CD4-positive, alpha-beta T cell (primary cell): ENCODE measurements at regions of chr16 and their contacts with region 1.

Region 1: GRCh38 chr16:67428146-67428731 is 2.7 kb upstream of the HSD11B2 start:
- DNase-seq: peak in 12 of 14 experiments; percentile 18 to 72 (median 42)
- ATAC-seq: peak; percentile 56
- H3K4me3 ChIP-seq: no peak overlapping the region
- H3K4me3 Mint-ChIP-seq: no peak overlapping the region
- H3K27ac ChIP-seq: no peak overlapping the region
- H3K27ac Mint-ChIP-seq: no peak overlapping the region
- H3K4me1 ChIP-seq: peaks cover 20% of the 10 kb centered on the region
- H3K4me1 Mint-ChIP-seq: peaks cover 9% of the 10 kb centered on the region
- H3K27me3 ChIP-seq: peaks cover 35 to 49% of the 10 kb centered on the region in 2 experiments
- H3K27me3 Mint-ChIP-seq: peaks cover 62% of the 10 kb centered on the region
- CTCF ChIP-seq: peak; percentile 63

Region 2: DNA sequence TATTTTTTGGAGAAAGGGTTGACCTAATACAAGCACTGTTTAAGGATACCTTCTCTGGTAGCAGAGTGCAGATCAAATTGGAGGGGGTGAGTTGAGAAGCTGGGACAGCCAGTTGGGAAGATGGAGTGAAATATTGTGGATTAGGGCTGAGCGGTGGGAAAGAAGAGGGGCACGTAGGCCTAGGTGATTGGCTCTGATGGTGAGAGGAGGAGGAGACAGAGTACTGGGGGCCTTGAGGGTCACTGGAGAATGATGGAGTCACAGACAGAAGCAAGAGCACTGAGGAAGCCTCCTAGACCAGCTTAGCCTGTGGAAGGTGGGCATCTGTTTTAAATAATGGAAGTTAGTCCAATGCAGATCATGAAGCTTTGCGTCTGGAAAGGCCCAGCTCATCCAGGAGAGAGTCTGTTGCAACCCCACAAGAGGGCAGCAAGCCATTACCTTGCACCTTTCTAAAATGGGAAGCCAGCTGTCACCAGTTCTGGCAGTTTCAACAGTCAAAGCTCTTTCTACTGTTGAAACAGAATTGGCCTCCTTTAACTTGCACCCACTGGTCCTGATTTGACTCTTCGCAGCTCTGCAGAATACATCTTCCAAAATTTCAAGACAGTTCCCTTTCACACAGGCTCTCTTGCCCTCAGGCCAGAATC is 167.7 kb before region 1 on chr16:
- CTCF ChIA-PET with region 1: no interaction called
- POLR2A ChIA-PET with region 1: no interaction called
- intact Hi-C with region 1: loop called in 1 of 2 experiments (anchors 5 kb)
- DNase-seq: peak in 4 of 14 experiments; percentile 24 to 47 (median 32)
- ATAC-seq: no peak
- H3K4me3 ChIP-seq: no peak overlapping the region
- H3K4me3 Mint-ChIP-seq: no peak overlapping the region
- H3K27ac ChIP-seq: no peak overlapping the region
- H3K27ac Mint-ChIP-seq: no peak overlapping the region
- H3K4me1 ChIP-seq: no peaks in the 10 kb centered on the region
- H3K4me1 Mint-ChIP-seq: no peaks in the 10 kb centered on the region
- H3K27me3 ChIP-seq: peaks cover 6 to 12% of the 10 kb centered on the region in 2 experiments
- H3K27me3 Mint-ChIP-seq: peaks cover 12% of the 10 kb centered on the region
- CTCF ChIP-seq: peak; percentile 10

Region 3: DNA sequence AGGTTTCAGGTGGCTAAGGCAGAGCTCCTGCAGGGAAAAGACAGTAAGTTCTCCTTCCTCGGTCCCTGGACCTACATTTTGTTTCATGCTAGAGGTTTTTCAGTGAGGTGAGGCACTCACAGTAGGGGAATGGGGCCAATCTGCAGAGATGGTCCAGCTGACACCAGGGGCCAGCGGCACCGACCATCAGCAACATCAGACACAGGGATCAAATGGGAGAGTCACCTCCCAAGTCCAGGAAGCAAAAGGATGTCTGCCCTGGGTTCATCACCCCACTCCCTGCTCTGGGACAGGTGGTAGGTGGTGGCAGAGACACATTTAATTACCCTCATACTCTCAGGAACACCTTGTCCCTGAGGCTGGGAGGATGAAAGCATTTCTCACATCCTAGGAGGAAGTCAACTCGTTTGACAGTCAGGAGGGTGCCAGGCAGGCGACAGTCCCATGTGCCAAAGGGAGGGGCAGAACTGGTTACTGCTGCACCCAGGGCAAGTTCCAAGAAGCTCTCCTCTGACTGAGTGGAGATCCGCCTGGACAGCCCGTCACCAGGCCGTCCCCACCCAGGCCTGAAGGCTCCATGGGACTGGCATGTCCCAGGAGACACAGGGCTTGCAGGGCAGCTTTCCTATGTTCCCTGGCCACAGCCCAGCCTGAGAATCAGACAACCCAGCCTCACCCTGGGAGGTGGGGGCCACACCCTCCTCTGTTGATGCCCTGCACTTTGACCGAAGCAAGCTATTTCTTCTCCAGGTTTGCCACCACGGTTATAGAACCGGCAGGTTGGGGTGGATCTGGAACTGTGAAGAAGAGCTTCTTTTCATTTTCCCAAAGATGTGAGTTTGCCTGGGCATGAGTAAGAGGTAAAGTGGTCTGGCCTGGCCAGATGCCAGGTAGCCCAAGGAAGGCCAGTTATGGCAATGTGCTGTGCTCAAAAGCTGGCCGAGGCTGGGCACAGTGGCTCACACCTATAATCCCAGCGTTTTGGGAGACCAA is 33.7 kb after region 1 on chr16:
- CTCF ChIA-PET with region 1: interaction called, 13 read pairs
- POLR2A ChIA-PET with region 1: no interaction called
- intact Hi-C with region 1: loop called in 1 of 2 experiments (anchors 2 kb)
- DNase-seq: no peak
- ATAC-seq: no peak
- H3K4me3 ChIP-seq: no peak overlapping the region
- H3K4me3 Mint-ChIP-seq: no peak overlapping the region
- H3K27ac ChIP-seq: no peak overlapping the region
- H3K27ac Mint-ChIP-seq: no peak overlapping the region
- H3K4me1 ChIP-seq: peaks cover 29% of the 10 kb centered on the region
- H3K4me1 Mint-ChIP-seq: peaks cover 38% of the 10 kb centered on the region
- H3K27me3 ChIP-seq: no peaks in the 10 kb centered on the region
- H3K27me3 Mint-ChIP-seq: no peaks in the 10 kb centered on the region
- CTCF ChIP-seq: no peak

Region 4: GRCh38 chr16:67470359-67470758 is 42.1 kb after region 1 on chr16:
- CTCF ChIA-PET with region 1: interaction called, 13 read pairs
- POLR2A ChIA-PET with region 1: no interaction called
- intact Hi-C with region 1: loop called in 1 of 2 experiments (anchors 2 kb)
- DNase-seq: no peak
- ATAC-seq: no peak
- H3K4me3 ChIP-seq: no peak overlapping the region
- H3K4me3 Mint-ChIP-seq: no peak overlapping the region
- H3K27ac ChIP-seq: no peak overlapping the region
- H3K27ac Mint-ChIP-seq: no peak overlapping the region
- H3K4me1 ChIP-seq: peaks cover 28% of the 10 kb centered on the region
- H3K4me1 Mint-ChIP-seq: peaks cover 53% of the 10 kb centered on the region
- H3K27me3 ChIP-seq: no peaks in the 10 kb centered on the region
- H3K27me3 Mint-ChIP-seq: no peaks in the 10 kb centered on the region
- CTCF ChIP-seq: no peak

Region 5: DNA sequence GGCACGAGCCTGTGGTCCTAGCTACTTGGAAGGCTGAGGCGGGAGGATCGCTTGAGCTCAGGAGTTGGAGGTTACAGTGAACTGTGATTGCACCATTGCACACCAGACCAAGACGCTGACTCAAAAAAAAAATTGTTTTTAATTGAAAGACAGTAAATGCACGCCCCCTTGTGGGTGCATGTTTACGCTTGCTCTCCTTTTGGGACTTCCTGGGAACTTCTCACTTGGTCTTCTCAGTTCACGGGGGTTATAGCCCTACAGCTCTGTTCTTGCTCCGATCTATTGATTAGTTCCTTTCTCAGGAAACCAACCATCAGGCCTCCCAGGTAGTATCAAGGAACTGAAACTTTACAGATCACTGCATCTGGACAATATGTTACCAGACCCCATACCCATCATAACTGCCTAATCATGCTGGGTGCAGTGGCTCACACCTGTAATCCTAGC is 86.2 kb after region 1 on chr16:
- CTCF ChIA-PET with region 1: interaction called, 4 read pairs
- POLR2A ChIA-PET with region 1: interaction called, 3 read pairs
- intact Hi-C with region 1: loop called in 1 of 2 experiments (anchors 5 kb)
- DNase-seq: peak; percentile 69 to 92 (median 78)
- ATAC-seq: peak; percentile 95
- H3K4me3 ChIP-seq: no peak overlapping the region
- H3K4me3 Mint-ChIP-seq: no peak overlapping the region
- H3K27ac ChIP-seq: no peak overlapping the region
- H3K27ac Mint-ChIP-seq: no peak overlapping the region
- H3K4me1 ChIP-seq: peaks cover 22% of the 10 kb centered on the region
- H3K4me1 Mint-ChIP-seq: peaks cover 16% of the 10 kb centered on the region
- H3K27me3 ChIP-seq: no peaks in the 10 kb centered on the region
- H3K27me3 Mint-ChIP-seq: no peaks in the 10 kb centered on the region
- CTCF ChIP-seq: peak; percentile 78